ENCODE measurements at regions of chr16 and their contacts with region 1.

Region 1: DNA sequence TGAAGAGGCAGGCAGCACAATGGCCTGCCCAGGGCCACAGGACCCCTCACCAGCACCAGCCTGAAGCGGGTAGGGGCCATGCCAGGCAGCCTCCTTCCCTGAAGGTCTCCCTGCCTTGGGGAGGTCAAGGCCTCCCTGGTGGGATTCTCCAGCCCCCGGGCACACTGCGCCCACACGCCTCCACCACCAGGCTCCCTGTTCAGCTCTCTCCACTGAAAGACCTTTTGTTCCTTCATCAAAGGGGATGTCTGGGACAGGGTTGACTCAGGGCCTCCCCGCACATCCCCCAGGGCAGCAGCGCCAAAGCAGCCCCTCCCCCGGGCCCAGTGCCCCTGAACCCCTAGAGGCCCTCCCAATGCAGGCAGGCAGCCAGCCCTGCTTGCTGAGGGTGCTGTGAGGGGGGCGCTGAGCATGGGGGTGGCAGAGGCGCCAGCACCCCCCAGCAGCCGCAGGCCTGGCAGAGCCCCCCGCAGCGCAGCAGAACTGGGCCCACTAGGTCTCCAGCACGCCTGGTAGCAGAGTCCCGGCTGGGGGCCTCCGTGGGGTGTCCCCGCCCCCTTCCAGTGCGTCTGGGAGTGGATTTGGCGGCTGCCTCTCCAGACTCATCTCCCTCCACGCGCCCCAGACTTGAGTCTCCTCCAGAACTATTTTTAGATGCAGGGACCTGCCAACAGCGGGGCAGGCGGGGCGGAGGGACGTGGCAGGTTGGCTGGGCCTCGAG is 13.1 kb downstream of the BCAR1 start:
- DNase-seq: peak; percentile 72 to 91 (median 87)
- H3K4me3 ChIP-seq: peak overlapping the region in 33 of 59 donors; percentile 0 to 49 (median 21)
- H3K27ac ChIP-seq: peak overlapping the region; percentile 92 to 100 (median 98)
- H3K27me3 ChIP-seq: no peaks in the 10 kb centered on the region
- CTCF ChIP-seq: peak in 16 of 56 donors; percentile 2 to 46 (median 18)

Region 2: GRCh38 chr16:75012380-75013081 is 225.8 kb before region 1 on chr16:
- intact Hi-C with region 1: no loop called
- DNase-seq: no peak
- H3K4me3 ChIP-seq: peak overlapping the region in 1 of 59 donors; percentile 7
- H3K27ac ChIP-seq: peak overlapping the region in 57 of 59 donors; percentile 22 to 87 (median 74)
- H3K27me3 ChIP-seq: no peaks in the 10 kb centered on the region
- CTCF ChIP-seq: no peak

Region 3: GRCh38 chr16:75198135-75198600 is 40.1 kb before region 1 on chr16:
- intact Hi-C with region 1: loop called (anchors 5 kb)
- DNase-seq: peak in 4 of 10 donors; percentile 19 to 38 (median 26)
- H3K4me3 ChIP-seq: no peak overlapping the region
- H3K27ac ChIP-seq: no peak overlapping the region
- H3K27me3 ChIP-seq: peaks cover 0 to 10% (median 0%) of the 10 kb centered on the region in 45 donors
- CTCF ChIP-seq: no peak

Region 4: DNA sequence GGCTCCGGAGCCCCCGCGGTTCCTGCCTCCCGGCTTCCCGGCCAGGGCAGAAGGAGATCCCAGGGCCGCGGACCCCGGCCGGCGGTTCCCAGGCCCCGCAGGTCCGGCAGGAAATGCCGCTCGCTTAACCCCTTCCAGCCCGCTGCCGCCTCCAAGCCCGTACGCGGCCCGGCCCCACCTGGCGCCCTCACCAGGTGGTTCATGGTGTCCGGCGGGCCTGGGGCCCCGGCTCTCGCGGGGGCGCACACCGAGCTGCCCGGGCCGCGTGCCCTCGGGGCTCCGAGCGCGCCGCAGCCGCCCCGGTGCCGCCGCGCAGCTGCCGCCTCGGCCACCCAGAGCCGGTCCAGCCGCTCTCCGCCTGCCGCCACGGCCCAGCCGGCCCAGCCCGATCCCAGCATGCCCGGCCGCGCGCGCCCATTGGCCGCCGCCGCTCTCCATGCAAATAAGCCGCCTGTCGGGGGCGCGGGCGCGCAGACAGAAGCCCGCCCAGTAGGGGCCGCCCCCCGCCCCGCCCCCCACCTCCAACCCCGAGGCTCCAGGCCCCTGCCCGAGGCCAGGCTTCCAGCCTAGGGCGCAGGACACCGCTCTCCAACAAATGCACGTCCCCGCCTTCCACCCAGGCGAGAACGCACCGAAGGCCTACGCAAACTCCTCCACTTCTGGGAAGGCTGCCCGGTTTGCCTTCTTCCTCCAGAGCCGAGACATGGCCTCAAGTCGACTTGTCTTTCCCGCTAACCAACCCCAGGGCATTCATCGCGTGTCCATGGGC is 13.2 kb after region 1 on chr16 and contains the start of gene BCAR1:
- intact Hi-C with region 1: loop called in 1 of 2 experiments (anchors 2 kb)
- DNase-seq: peak; percentile 80 to 92 (median 86)
- H3K4me3 ChIP-seq: peak within 1 kb of the TSS; percentile 52 to 94 (median 83)
- H3K27ac ChIP-seq: peak within 1 kb of the TSS; percentile 79 to 100 (median 99)
- H3K27me3 ChIP-seq: no peaks in the 10 kb centered on the region
- CTCF ChIP-seq: peak in 47 of 56 donors; percentile 7 to 65 (median 33)
- total RNA-seq, gene BCAR1: 67.8 to 163 (median 96.2) TPM

Region 5: DNA sequence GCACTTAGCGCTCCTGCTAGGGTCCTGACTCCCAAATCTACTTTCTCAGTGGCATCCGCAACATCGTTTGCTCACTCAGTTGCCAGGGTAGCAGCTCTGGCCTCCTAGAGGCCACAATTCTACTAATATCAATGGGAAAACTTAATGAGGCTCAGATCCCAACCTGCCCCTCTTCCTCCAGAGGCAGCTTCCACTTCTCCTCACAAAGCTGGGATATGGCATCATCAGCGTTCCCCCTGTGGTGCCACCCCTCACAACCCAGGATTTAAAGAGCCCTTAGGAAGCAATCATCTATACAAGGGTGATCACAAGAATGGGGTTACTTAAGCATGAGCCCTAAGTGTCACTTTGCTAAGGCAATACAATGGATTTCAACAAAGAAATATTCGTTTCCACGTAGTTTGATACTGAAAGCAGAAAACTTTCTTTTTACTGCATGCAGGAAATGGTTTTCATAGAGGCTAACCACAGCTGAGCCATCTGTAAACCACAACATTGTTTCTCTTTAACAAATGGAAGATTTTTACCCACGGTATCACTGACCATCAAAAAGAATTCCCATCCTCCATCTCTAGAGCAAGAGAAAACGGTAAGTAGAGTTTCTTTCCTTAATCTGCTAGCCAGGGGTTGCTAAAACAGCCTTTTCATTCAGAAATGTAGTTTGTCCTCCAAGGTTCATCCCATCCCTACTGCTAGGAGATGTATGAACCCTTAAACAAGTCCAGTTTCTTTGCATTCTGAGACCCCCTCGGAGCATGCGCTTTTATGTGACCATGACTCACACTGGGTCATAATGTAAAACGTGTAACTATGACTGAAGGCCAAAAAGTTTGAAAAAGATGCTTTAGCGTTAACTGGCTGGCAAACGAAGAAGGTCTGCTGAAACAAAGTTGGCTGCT is 81.5 kb after region 1 on chr16:
- intact Hi-C with region 1: loop called (anchors 5 kb)
- DNase-seq: no peak
- H3K4me3 ChIP-seq: no peak overlapping the region
- H3K27ac ChIP-seq: peak overlapping the region in 54 of 59 donors; percentile 3 to 88 (median 66)
- H3K27me3 ChIP-seq: no peaks in the 10 kb centered on the region
- CTCF ChIP-seq: no peak

Region 6: GRCh38 chr16:75385507-75386152 is 147.3 kb after region 1 on chr16:
- intact Hi-C with region 1: loop called (anchors 1 to 2 kb)
- DNase-seq: no peak
- H3K4me3 ChIP-seq: no peak overlapping the region
- H3K27ac ChIP-seq: peak overlapping the region in 4 of 59 donors; percentile 10 to 48 (median 12)
- H3K27me3 ChIP-seq: no peaks in the 10 kb centered on the region
- CTCF ChIP-seq: peak; percentile 70 to 95 (median 85)

Region 7: GRCh38 chr16:75402821-75403475 is 164.7 kb after region 1 on chr16:
- intact Hi-C with region 1: loop called in 1 of 2 experiments (anchors 5 kb)
- DNase-seq: no peak
- H3K4me3 ChIP-seq: no peak overlapping the region
- H3K27ac ChIP-seq: peak overlapping the region in 18 of 59 donors; percentile 9 to 64 (median 32)
- H3K27me3 ChIP-seq: no peaks in the 10 kb centered on the region
- CTCF ChIP-seq: peak; percentile 47 to 83 (median 72)

Region 8: GRCh38 chr16:75464130-75464918 is 226.0 kb after region 1 on chr16 and contains the start of gene TMEM170A:
- intact Hi-C with region 1: loop called in 1 of 2 experiments (anchors 10 kb)
- DNase-seq: peak; percentile 97 to 99 (median 98)
- H3K4me3 ChIP-seq: peak within 1 kb of the TSS; percentile 68 to 99 (median 95)
- H3K27ac ChIP-seq: peak within 1 kb of the TSS; percentile 86 to 99 (median 96)
- H3K27me3 ChIP-seq: no peaks in the 10 kb centered on the region
- CTCF ChIP-seq: peak in 55 of 56 donors; percentile 99 to 100 (median 100)
- total RNA-seq, gene TMEM170A: 20.2 to 47.4 (median 29.5) TPM

Measured in dorsolateral prefrontal cortex (tissue), 120 donors.